ENCODE measurements at regions of chr21 and their contacts with region 1.

Region 1: DNA sequence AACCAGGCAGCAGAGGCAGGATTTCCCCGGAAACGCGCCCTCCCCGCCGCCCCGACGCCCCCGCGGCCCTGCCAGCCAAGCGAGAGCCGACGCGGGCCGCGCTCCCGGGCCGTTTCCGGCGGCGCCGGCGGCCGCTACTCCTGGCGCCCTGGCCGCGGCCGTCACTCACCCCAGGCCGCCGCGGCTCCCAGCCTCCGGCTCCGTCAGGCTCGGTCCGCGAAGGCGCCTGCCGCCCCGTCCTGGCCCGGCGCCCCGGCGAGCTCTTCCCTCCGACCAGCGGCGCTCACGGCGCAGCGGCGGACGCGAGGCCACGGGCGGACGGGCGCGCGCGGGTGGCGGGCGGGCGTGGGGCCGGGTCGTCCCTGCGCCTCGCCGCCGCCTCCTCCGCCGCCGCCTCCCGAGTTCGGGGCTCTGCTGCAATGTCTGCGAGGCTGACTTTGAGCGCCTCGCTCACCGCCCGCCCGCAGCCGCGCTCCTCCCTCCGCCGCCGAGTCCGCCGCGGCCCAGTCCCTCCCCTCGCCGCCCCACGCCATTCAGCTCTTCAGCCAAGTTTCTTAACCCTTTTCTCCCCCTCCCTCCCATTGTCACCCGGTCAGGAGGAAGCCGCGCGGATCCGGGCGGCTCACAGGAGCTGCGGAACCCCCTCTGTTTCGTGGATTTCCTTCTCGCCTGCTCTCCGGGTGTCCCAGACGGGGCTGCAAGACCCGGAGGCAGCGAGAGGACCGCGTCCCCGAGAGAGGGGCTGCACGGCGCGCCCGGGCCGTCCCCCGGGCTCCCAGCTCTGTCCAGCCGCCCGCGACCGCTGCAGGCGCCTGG is at the start of gene NRIP1:
- DNase-seq: peak; percentile 93
- H3K4me3 ChIP-seq: peak within 1 kb of the TSS; percentile 89 to 99 (median 96)
- H3K27ac ChIP-seq: peak within 1 kb of the TSS; percentile 98 to 100 (median 100)
- H3K4me1 ChIP-seq: peaks cover 7 to 39% (median 32%) of the 10 kb centered on the region in 4 donors
- H3K27me3 ChIP-seq: no peaks in the 10 kb centered on the region
- CTCF ChIP-seq: no peak
- EP300 ChIP-seq: no peak
- POLR2A ChIP-seq: peak; percentile 83
- total RNA-seq, gene NRIP1: 38.5 to 63.7 (median 55.6) TPM

Region 2: GRCh38 chr21:14864211-14865021 is 200.4 kb before region 1 on chr21:
- in situ Hi-C with region 1: loop called in 1 of 4 experiments (anchors 25 kb)
- intact Hi-C with region 1: loop called (anchors 5 kb)
- DNase-seq: peak; percentile 81
- H3K4me3 ChIP-seq: no peak overlapping the region
- H3K27ac ChIP-seq: peak overlapping the region; percentile 4 to 52 (median 23)
- H3K4me1 ChIP-seq: peaks cover 0 to 46% (median 6%) of the 10 kb centered on the region in 4 donors
- H3K27me3 ChIP-seq: no peaks in the 10 kb centered on the region
- CTCF ChIP-seq: peak; percentile 50 to 64 (median 57)
- EP300 ChIP-seq: no peak
- POLR2A ChIP-seq: no peak

Region 3: GRCh38 chr21:14877570-14878228 is 187.1 kb before region 1 on chr21:
- in situ Hi-C with region 1: loop called in 2 of 4 experiments (anchors 10 to 25 kb)
- intact Hi-C with region 1: no loop called
- DNase-seq: no peak
- H3K4me3 ChIP-seq: no peak overlapping the region
- H3K27ac ChIP-seq: peak overlapping the region in 2 of 4 donors; percentile 6 to 37
- H3K4me1 ChIP-seq: peaks cover 0 to 35% (median 6%) of the 10 kb centered on the region in 4 donors
- H3K27me3 ChIP-seq: no peaks in the 10 kb centered on the region
- CTCF ChIP-seq: no peak
- EP300 ChIP-seq: no peak
- POLR2A ChIP-seq: no peak

Region 4: GRCh38 chr21:15729674-15730483 is 665.1 kb after region 1 on chr21 and contains the start of gene USP25:
- in situ Hi-C with region 1: loop called in 1 of 4 experiments (anchors 25 kb)
- intact Hi-C with region 1: no loop called
- DNase-seq: peak; percentile 95
- H3K4me3 ChIP-seq: peak within 1 kb of the TSS; percentile 74 to 88 (median 84)
- H3K27ac ChIP-seq: peak within 1 kb of the TSS; percentile 96 to 99 (median 96)
- H3K4me1 ChIP-seq: peaks cover 5 to 41% (median 22%) of the 10 kb centered on the region in 4 donors
- H3K27me3 ChIP-seq: no peaks in the 10 kb centered on the region
- CTCF ChIP-seq: no peak
- EP300 ChIP-seq: no peak
- POLR2A ChIP-seq: peak; percentile 68
- total RNA-seq, gene USP25: 37.4 to 107 (median 69.2) TPM